Activated CD8-positive, alpha-beta memory T cell treated with anti-CD3 and anti-CD28 coated beads, Interleukin-2, amount 10 ng/mL, durations not matched to agents 7 days and 5 days (primary cell): ENCODE measurements at regions of chr7 and their contacts with region 1.

Region 1: GRCh38 chr7:141737834-141738591 is at the start of gene SSBP1:
- DNase-seq: peak; percentile 95
- ATAC-seq: peak; percentile 94
- H3K4me3 Mint-ChIP-seq: peak within 1 kb of the TSS; percentile 95
- H3K27ac Mint-ChIP-seq: peak within 1 kb of the TSS; percentile 96
- H3K4me1 Mint-ChIP-seq: peaks cover 37% of the 10 kb centered on the region
- H3K27me3 Mint-ChIP-seq: no peaks in the 10 kb centered on the region
- total RNA-seq, gene SSBP1: 123 to 133 TPM

Region 2: DNA sequence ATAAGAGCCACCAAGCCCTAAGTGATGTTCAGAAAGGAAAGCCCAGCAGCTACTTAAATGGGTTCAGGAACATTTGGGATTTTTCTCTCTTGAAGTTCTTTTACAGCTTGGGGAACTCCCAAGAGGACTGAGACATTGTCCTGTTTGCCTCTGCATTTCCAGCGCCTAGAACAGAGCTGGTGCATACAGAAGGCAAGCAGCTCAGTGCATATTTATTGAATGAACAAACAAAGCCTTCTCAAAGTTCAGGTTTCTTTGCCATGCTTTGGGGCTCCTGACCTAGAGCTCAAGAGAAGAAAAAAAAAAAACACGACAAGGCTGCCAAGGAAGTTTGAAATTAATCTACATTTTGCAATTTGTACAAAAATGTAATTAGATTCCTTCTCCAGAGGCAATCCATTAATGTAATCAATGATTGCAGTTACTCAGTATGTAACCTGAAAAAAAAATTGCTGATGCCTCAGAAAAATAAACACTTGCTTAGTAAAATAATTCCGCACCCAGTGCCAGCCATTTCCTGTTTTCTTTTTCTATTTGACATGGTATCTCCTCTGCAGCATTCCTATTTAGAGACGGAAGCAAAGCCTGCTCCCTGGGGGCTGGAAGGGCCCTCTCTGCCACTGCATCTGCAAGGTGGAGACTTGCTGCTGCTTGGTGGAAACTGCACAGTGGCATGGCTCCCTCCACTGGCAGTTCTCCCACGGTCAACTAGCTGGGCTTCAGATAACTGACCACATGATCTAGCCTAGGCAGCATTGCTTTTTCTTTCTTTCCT is 506.8 kb before region 1 on chr7:
- CTCF ChIA-PET with region 1: no interaction called
- DNase-seq: no peak
- ATAC-seq: no peak
- H3K4me3 Mint-ChIP-seq: no peak overlapping the region
- H3K27ac Mint-ChIP-seq: no peak overlapping the region
- H3K4me1 Mint-ChIP-seq: no peaks in the 10 kb centered on the region
- H3K27me3 Mint-ChIP-seq: peaks cover 24% of the 10 kb centered on the region

Region 3: GRCh38 chr7:141551094-141551781 is 186.8 kb before region 1 on chr7 and contains the start of gene AGK:
- CTCF ChIA-PET with region 1: interaction called, 12 read pairs
- DNase-seq: peak; percentile 84
- ATAC-seq: peak; percentile 96
- H3K4me3 Mint-ChIP-seq: peak within 1 kb of the TSS; percentile 80
- H3K27ac Mint-ChIP-seq: peak within 1 kb of the TSS; percentile 86
- H3K4me1 Mint-ChIP-seq: peaks cover 37% of the 10 kb centered on the region
- H3K27me3 Mint-ChIP-seq: no peaks in the 10 kb centered on the region
- total RNA-seq, gene AGK: 45.9 to 75.8 TPM

Region 4: GRCh38 chr7:141654551-141654950 is 83.5 kb before region 1 on chr7:
- CTCF ChIA-PET with region 1: interaction called, 51 read pairs
- DNase-seq: peak; percentile 80
- ATAC-seq: peak; percentile 94
- H3K4me3 Mint-ChIP-seq: no peak overlapping the region
- H3K27ac Mint-ChIP-seq: peak overlapping the region; percentile 57
- H3K4me1 Mint-ChIP-seq: peaks cover 5% of the 10 kb centered on the region
- H3K27me3 Mint-ChIP-seq: no peaks in the 10 kb centered on the region

Region 5: DNA sequence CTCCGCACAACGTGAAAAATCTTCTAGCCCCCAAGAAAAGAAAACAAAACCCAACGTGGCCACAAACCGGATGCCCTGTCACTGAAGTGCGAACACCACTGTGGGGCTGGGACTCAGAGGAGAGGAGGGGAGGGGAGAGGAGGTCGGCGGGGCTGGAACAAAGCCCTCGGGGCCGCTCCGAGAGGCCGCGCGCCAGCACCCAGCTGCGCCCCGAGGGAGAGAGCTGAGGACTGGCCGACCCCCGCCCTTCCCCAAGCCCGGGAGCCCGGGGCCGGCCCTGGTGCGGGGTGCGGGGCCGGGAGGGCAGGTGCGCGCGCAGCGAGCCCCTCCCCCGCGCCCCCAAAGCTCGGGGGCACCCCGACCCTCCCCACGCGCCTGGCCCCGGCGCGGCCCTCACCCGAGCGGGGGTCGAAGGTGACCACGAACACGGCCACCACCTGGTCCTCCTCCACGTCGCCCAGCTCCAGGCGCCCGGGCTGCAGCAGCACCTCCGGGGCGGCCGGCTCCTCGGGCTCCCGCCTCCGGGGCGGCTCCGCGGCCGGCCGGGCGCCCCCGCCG is 36.4 kb before region 1 on chr7:
- CTCF ChIA-PET with region 1: interaction called, 15 read pairs
- DNase-seq: peak; percentile 87
- ATAC-seq: peak; percentile 88
- H3K4me3 Mint-ChIP-seq: peak overlapping the region; percentile 67
- H3K27ac Mint-ChIP-seq: peak overlapping the region; percentile 64
- H3K4me1 Mint-ChIP-seq: peaks cover 28% of the 10 kb centered on the region
- H3K27me3 Mint-ChIP-seq: peaks cover 40% of the 10 kb centered on the region

Region 6: DNA sequence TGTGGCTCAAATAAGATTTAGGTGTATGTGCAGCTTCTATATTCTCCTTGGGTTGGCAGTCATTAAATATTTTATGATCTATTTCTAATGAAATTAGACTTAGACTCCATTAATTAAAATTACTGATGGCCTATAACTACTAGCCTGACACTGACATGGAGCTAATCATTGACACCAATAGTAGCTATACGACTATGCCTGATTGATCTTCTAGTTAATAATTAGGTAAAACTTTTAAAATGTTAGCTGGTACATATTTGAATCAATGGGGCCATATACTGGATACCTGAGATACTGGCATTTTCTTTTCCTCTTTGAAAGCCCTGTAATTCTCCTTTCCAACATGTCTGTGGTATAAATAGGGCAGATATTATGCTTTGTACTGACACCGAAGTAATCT is 15.5 kb before region 1 on chr7:
- CTCF ChIA-PET with region 1: interaction called, 20 read pairs
- DNase-seq: no peak
- ATAC-seq: no peak
- H3K4me3 Mint-ChIP-seq: no peak overlapping the region
- H3K27ac Mint-ChIP-seq: no peak overlapping the region
- H3K4me1 Mint-ChIP-seq: peaks cover 5% of the 10 kb centered on the region
- H3K27me3 Mint-ChIP-seq: no peaks in the 10 kb centered on the region